AG04449 (cell line): ENCODE measurements at regions of chr15 and their contacts with region 1.

Region 1: DNA sequence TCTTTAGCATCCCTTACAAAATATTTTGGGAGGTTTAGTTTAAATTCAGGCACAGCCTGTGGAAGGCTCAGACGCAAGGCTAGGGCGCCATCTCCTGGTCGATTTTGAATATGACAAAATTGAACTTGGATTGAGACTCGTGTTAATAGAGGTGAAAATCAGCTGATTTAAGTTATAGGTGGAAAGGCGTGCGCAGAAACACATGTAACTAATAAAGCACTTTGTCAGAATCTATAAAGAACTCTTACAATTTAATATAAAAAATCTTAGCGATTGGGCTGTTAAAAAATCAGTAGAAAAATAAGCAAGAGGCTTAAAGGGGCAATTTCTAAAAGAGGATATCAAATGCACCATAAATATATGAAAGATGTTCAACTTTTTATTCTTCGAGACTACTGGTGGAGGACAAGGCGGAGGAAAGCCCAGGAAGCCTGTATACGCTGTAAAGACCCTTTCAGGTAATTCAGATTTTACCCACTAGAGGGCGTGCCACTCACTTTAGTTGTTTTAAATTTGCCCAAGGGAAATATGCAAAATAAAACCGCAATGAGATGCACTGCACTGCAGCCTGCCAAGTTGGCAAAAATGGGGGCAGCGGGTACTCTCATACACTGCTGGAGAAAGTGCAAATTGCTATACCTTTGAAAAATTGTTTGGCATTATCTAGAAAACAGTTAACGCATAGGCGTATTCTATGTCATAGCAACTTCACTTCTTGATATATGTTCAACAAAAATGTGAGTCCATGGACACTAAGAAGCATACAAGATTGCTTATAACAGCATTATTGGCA is 64.7 kb downstream of the SLC30A4 start:
- DNase-seq: no peak
- H3K4me3 ChIP-seq: peak overlapping the region; percentile 55
- CTCF ChIP-seq: peak; percentile 60

Region 2: GRCh38 chr15:45198337-45199135 is 259.3 kb before region 1 on chr15:
- CTCF ChIA-PET with region 1: interaction called, 27 read pairs
- POLR2A ChIA-PET with region 1: no interaction called
- DNase-seq: peak; percentile 87
- H3K4me3 ChIP-seq: peak overlapping the region; percentile 92
- CTCF ChIP-seq: peak; percentile 87

Region 3: GRCh38 chr15:45425135-45425534 is 32.7 kb before region 1 on chr15:
- CTCF ChIA-PET with region 1: interaction called, 363 read pairs
- POLR2A ChIA-PET with region 1: no interaction called
- DNase-seq: no peak
- H3K4me3 ChIP-seq: no peak overlapping the region
- CTCF ChIP-seq: no peak

Region 4: DNA sequence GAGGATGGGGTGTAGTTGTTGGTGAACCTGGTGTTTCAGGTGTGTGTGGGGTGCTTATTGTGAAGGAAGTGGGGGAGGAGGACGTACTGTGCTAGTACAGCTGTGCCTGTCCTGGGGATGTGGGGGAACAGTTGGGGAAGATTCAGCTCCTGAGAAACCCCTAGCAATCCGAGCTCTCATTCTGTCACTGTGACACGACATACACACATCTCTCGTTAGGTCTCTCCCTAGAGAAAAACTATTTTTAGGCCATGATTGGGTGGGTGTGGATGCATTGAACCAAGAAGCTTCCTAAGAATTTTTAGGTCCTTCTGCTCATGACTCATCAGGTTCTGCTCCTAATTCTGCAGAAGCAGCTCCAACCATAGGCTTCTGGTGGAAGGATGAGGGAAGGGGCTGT is 10.5 kb after region 1 on chr15:
- CTCF ChIA-PET with region 1: interaction called, 37 read pairs
- POLR2A ChIA-PET with region 1: no interaction called
- DNase-seq: no peak
- H3K4me3 ChIP-seq: no peak overlapping the region
- CTCF ChIP-seq: no peak

Region 5: GRCh38 chr15:45587095-45587860 is 129.4 kb after region 1 on chr15 and contains the start of gene BLOC1S6:
- CTCF ChIA-PET with region 1: interaction called, 52 read pairs
- POLR2A ChIA-PET with region 1: no interaction called
- DNase-seq: peak; percentile 52
- H3K4me3 ChIP-seq: peak within 1 kb of the TSS; percentile 91
- CTCF ChIP-seq: no peak

Region 6: DNA sequence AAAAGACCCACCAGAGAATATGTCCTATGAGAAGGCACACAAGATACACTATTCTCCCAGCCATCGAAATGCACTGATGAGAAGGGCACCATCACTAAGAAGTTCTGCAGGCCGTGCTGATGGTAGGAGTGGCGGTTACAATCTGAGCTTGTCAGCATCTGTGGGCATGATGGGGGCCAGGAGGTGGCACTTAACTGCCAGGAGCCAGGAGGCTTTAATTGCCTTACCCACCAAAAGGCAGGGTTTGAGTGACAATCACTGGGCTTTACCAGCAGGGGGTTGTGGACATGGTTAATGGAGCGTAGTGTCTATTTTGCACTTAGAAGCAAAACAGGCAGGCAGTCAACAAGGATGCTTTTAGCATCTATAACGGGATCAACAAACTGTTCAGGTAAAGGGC is 161.0 kb after region 1 on chr15:
- CTCF ChIA-PET with region 1: interaction called, 282 read pairs
- POLR2A ChIA-PET with region 1: no interaction called
- DNase-seq: no peak
- H3K4me3 ChIP-seq: no peak overlapping the region
- CTCF ChIP-seq: no peak